ENCODE measurements at regions of chr7 and their contacts with region 1.

Region 1: GRCh38 chr7:104923010-104923421 is 91.0 kb upstream of the KMT2E start:
- DNase-seq: peak; percentile 82
- H3K4me3 Mint-ChIP-seq: no peak overlapping the region
- H3K27ac Mint-ChIP-seq: no peak overlapping the region
- H3K4me1 Mint-ChIP-seq: peaks cover 10% of the 10 kb centered on the region
- H3K27me3 Mint-ChIP-seq: peaks cover 6% of the 10 kb centered on the region

Region 2: GRCh38 chr7:104643587-104644217 is 279.3 kb before region 1 on chr7:
- CTCF ChIA-PET with region 1: interaction called, 36 read pairs
- POLR2A ChIA-PET with region 1: no interaction called
- DNase-seq: no peak
- H3K4me3 Mint-ChIP-seq: no peak overlapping the region
- H3K27ac Mint-ChIP-seq: no peak overlapping the region
- H3K4me1 Mint-ChIP-seq: no peaks in the 10 kb centered on the region
- H3K27me3 Mint-ChIP-seq: peaks cover 8% of the 10 kb centered on the region

Region 3: DNA sequence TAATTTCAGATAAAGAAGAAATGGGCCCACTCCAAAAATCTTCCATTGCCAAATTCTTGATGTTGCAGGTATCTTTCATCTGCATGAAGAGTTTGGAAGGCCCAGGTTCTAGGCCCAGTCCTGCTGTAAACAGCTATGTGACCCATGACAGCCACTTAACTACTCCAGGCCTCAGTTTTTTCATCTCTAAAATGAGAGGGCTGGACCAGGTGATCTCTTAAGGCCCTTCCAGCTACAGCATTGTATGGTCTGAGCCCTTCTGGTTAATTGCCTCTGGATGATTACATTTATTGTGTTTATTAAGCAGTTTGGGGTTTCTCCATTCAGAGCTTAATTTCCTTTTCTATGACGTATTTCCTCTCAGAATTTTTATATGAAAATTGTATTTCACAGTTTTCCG is 99.8 kb before region 1 on chr7:
- CTCF ChIA-PET with region 1: no interaction called
- POLR2A ChIA-PET with region 1: no interaction called
- DNase-seq: no peak
- H3K4me3 Mint-ChIP-seq: no peak overlapping the region
- H3K27ac Mint-ChIP-seq: no peak overlapping the region
- H3K4me1 Mint-ChIP-seq: no peaks in the 10 kb centered on the region
- H3K27me3 Mint-ChIP-seq: peaks cover 2% of the 10 kb centered on the region

Region 4: DNA sequence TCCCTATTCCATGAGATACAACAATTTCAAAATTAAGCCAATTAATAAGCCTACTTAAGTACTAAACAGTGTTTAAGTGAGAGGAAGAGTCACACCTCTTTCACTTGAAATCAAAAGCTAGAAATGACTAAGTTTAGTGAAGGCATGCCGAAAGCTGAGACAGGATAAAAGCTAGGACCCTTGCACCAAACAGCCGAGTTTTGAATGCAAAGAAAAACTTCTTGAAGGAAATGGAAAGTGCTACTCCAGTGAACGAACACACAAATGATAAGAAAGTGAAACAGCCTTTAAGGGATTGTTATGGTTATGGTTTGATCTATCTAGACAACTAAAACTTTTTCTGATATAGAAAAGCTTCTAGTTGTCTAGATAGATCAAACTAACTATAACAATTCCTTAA is 44.4 kb before region 1 on chr7:
- CTCF ChIA-PET with region 1: interaction called, 136 read pairs
- POLR2A ChIA-PET with region 1: interaction called, 3 read pairs
- DNase-seq: no peak
- H3K4me3 Mint-ChIP-seq: peak overlapping the region; percentile 29
- H3K27ac Mint-ChIP-seq: peak overlapping the region; percentile 50
- H3K4me1 Mint-ChIP-seq: peaks cover 23% of the 10 kb centered on the region
- H3K27me3 Mint-ChIP-seq: no peaks in the 10 kb centered on the region